ENCODE measurements at regions of chr2 and their contacts with region 1.

Region 1: DNA sequence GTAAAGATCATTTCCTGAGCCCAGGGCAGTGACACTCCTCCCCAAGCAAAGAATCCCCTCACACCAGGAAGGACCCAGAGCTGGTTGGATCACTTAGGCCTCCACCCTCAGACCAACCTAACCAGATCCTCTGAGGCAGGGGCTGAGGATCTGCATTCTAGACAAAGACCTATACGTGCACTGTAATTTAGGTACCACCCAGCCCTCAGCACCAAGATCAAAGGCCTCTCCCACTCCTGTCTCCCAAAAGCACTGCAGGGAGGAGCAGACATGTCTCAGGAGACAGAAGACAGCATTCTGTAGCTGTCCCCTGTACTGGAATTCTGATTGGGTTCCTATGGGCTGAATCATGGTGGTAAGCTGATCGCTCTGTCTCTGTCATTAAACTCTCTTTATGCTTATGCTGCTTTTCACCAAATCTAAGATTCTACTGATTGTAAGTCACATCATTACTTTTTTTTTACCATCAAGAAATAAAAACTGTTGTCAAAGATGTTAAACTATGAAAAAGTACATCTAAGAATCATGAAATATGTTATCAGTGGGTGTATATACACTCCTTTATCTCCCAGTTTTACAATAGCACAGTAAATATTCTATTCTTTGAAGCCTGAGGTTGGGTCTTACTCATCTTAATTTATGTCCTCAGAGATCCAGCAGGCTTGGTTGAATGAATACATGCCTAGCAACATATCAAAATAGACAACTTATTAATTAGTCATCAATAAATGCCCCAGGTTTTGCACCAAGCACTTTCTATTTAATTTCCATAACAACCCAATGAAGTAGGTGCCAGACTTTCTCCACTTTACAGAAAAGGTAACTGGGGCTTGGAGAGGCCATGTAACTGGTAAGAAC is 28.3 kb downstream of the MCFD2 start:
- DNase-seq: no peak
- ATAC-seq: no peak
- H3K4me3 ChIP-seq: no peak overlapping the region
- H3K27ac ChIP-seq: no peak overlapping the region
- H3K4me1 ChIP-seq: no peaks in the 10 kb centered on the region
- H3K27me3 ChIP-seq: no peaks in the 10 kb centered on the region

Region 2: DNA sequence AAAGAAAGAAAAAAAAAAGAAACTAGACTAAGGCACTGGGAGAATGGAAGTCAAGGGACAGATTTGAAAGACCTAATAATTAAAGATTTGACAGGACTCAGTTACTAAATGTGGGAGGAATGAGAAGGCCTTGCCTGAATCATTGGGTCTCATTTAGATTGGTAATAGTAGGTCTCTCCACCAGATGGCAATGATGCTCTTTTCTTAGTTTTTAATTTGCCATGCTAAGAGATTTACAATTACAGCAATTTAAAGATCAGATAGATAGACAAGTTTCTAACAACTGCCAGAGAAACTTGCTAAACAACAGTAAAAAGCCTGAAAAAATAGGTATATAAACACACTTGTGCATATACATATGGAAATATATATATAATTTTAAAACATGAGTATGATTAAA is 254.9 kb before region 1 on chr2:
- intact Hi-C with region 1: loop called (anchors 1 to 2 kb)
- DNase-seq: no peak
- ATAC-seq: no peak
- H3K4me3 ChIP-seq: no peak overlapping the region
- H3K27ac ChIP-seq: no peak overlapping the region
- H3K4me1 ChIP-seq: no peaks in the 10 kb centered on the region
- H3K27me3 ChIP-seq: no peaks in the 10 kb centered on the region

Region 3: GRCh38 chr2:46650556-46651001 is 236.7 kb before region 1 on chr2:
- intact Hi-C with region 1: loop called in 1 of 2 experiments (anchors 5 kb)
- DNase-seq: peak in 1 of 2 donors; percentile 72
- ATAC-seq: no peak
- H3K4me3 ChIP-seq: no peak overlapping the region
- H3K27ac ChIP-seq: no peak overlapping the region
- H3K4me1 ChIP-seq: no peaks in the 10 kb centered on the region
- H3K27me3 ChIP-seq: no peaks in the 10 kb centered on the region

Measured in aorta (tissue), 5 donors.